Activated naive CD4-positive, alpha-beta T cell treated with anti-CD3 and anti-CD28 coated beads, Interleukin-2, amount 10 ng/mL, durations not matched to agents 7 days and 5 days (primary cell): ENCODE measurements at regions of chr1 and their contacts with region 1.

Region 1: DNA sequence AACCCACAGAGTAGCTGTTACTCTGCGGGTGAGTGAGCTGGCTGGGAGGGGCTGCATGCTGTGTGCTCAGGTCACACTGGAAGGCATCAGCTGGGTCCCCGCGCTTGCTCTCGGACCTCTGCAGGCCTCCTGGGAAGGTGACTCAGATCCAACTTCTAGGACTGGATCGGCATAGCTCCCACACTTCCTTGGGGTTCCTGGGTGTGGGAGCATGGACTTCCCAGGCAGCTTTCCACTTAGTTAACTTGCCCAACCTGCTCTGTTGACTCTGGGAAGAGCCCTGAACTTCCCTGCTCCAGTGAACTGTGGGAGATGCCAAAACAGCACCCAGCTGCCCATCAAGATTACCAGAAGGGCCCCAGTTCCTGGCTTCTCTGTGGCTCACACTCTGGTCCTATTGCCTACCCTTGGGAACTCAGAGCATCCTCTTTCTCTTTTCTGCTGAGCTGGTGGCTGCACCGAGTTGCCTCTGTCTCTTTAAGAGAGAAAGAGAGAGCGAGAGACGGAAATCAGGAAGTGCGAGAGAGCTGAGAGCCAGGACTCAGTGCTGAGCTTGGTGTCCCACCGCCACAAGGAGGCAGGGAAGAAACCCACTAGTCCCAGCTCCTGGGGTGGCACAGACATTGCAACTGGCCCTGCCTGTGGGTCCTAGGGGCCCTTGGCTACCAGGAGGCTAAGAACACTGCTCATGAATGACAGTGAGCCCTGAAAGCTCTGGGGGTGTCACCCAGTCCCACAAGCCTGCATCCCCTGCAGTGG is at the start of gene IKBKE:
- DNase-seq: peak; percentile 75
- H3K4me3 Mint-ChIP-seq: peak within 1 kb of the TSS; percentile 72
- H3K27ac Mint-ChIP-seq: peak within 1 kb of the TSS; percentile 67
- H3K4me1 Mint-ChIP-seq: peaks cover 88% of the 10 kb centered on the region
- H3K27me3 Mint-ChIP-seq: no peaks in the 10 kb centered on the region

Region 2: GRCh38 chr1:206411321-206411720 is 58.8 kb before region 1 on chr1:
- CTCF ChIA-PET with region 1: no interaction called
- DNase-seq: no peak
- H3K4me3 Mint-ChIP-seq: no peak overlapping the region
- H3K27ac Mint-ChIP-seq: no peak overlapping the region
- H3K4me1 Mint-ChIP-seq: no peaks in the 10 kb centered on the region
- H3K27me3 Mint-ChIP-seq: no peaks in the 10 kb centered on the region

Region 3: GRCh38 chr1:206456577-206457370 is 13.3 kb before region 1 on chr1:
- CTCF ChIA-PET with region 1: interaction called, 43 read pairs
- DNase-seq: no peak
- H3K4me3 Mint-ChIP-seq: no peak overlapping the region
- H3K27ac Mint-ChIP-seq: no peak overlapping the region
- H3K4me1 Mint-ChIP-seq: peaks cover 12% of the 10 kb centered on the region
- H3K27me3 Mint-ChIP-seq: no peaks in the 10 kb centered on the region

Region 4: GRCh38 chr1:206489980-206490770 is 20.1 kb after region 1 on chr1:
- CTCF ChIA-PET with region 1: interaction called, 16 read pairs
- DNase-seq: peak; percentile 76
- H3K4me3 Mint-ChIP-seq: no peak overlapping the region
- H3K27ac Mint-ChIP-seq: peak overlapping the region; percentile 1
- H3K4me1 Mint-ChIP-seq: peaks cover 5% of the 10 kb centered on the region
- H3K27me3 Mint-ChIP-seq: no peaks in the 10 kb centered on the region

Region 5: DNA sequence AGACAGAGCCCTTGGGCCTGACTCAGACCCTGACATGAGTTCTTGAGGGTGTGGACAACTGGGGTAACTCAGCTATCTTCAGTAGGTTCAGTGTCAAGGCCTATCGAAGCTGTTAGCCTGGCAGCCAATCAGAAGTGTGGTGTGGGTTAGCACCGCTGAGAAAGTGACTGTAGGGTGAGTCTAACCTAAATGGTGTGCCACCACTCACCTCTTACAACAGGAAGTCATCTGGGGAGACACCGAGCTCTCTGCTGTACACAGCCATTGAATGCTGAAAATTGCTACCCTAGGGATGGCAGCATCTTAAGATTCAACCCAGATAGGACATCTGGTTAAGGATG is 81.8 kb after region 1 on chr1:
- CTCF ChIA-PET with region 1: no interaction called
- DNase-seq: peak; percentile 86
- H3K4me3 Mint-ChIP-seq: peak overlapping the region; percentile 56
- H3K27ac Mint-ChIP-seq: peak overlapping the region; percentile 89
- H3K4me1 Mint-ChIP-seq: peaks cover 62% of the 10 kb centered on the region
- H3K27me3 Mint-ChIP-seq: no peaks in the 10 kb centered on the region